ENCODE measurements at regions of chr10 and their contacts with region 1.

Region 1: GRCh38 chr10:122062831-122063674 is 74.1 kb downstream of the TACC2 start:
- DNase-seq: peak; percentile 97
- ATAC-seq: peak; percentile 100
- H3K4me3 ChIP-seq: peak overlapping the region in 2 of 3 experiments; percentile 7 to 32; a peak in 3 of 6 replicates
- H3K27ac ChIP-seq: peak overlapping the region; percentile 75
- H3K4me1 ChIP-seq: peaks cover 52% of the 10 kb centered on the region
- H3K27me3 ChIP-seq: no peaks in the 10 kb centered on the region
- CTCF ChIP-seq: 0 out of 2 replicates have a peak, but pooled peaks have one; percentile 9
- EP300 ChIP-seq: peak; percentile 59 to 93; a peak in 3 of 4 replicates
- POLR2A ChIP-seq: peak in 1 of 2 experiments; percentile 26; a peak in 1 of 4 replicates
- RAD21 ChIP-seq: 0 out of 2 replicates have a peak, but pooled peaks have one; percentile 9

Region 2: DNA sequence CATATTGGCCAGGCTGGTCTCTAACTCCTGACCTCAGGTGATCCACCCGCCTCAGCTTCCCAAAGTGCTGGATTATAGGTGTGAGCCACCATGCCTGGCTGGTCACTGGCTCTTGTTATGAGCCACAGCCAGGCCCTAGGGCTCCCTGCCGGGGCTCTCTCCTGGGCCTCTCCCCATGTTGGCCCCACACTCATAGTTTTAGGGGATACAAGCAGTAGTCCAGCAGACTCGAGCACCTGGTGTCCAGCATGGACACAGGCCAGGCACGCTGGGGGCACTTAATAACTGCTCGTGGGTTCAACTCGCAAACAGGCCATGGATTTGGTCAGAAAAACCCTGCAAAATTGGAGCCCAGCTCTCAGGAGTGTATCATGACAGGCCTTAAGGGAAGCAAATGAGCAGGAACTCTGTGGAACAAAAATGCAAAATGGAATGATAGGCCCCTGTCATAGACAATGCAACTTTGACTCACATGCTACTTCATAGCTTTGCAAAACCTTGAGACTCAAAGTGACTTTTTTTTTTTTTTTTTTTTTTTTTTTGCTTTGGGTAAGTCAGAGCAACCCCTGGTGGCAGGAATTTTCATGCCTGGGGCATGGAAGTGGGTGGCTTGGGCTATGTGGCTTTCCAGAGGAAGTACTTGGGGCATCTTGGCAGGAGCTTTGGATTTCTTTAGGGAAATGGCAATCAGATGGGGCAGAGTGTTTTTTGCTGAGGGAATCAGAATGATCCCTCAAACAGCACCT is 11.6 kb before region 1 on chr10:
- CTCF ChIA-PET with region 1: no interaction called
- POLR2A ChIA-PET with region 1: interaction called, 19 read pairs
- in situ Hi-C with region 1: no loop called
- intact Hi-C with region 1: no loop called
- DNase-seq: peak; percentile 70
- ATAC-seq: peak; percentile 34
- H3K4me3 ChIP-seq: no peak overlapping the region
- H3K27ac ChIP-seq: no peak overlapping the region
- H3K4me1 ChIP-seq: peaks cover 69% of the 10 kb centered on the region
- H3K27me3 ChIP-seq: no peaks in the 10 kb centered on the region
- CTCF ChIP-seq: peak; percentile 53
- EP300 ChIP-seq: no peak
- POLR2A ChIP-seq: no peak
- RAD21 ChIP-seq: no peak